Activated CD8-positive, alpha-beta T cell treated with anti-CD3 and anti-CD28 coated beads, Interleukin-2, amount 10 ng/mL, durations not matched to agents 7 days and 5 days (primary cell): ENCODE measurements at regions of chr9 and their contacts with region 1.

Region 1: GRCh38 chr9:120875954-120876841 is 790 bp downstream of the PHF19 start:
- DNase-seq: peak; percentile 96
- ATAC-seq: peak; percentile 57
- H3K4me3 Mint-ChIP-seq: peak overlapping the region; percentile 88
- H3K27ac Mint-ChIP-seq: peak overlapping the region; percentile 95
- H3K4me1 Mint-ChIP-seq: peaks cover 77% of the 10 kb centered on the region
- H3K27me3 Mint-ChIP-seq: no peaks in the 10 kb centered on the region

Region 2: DNA sequence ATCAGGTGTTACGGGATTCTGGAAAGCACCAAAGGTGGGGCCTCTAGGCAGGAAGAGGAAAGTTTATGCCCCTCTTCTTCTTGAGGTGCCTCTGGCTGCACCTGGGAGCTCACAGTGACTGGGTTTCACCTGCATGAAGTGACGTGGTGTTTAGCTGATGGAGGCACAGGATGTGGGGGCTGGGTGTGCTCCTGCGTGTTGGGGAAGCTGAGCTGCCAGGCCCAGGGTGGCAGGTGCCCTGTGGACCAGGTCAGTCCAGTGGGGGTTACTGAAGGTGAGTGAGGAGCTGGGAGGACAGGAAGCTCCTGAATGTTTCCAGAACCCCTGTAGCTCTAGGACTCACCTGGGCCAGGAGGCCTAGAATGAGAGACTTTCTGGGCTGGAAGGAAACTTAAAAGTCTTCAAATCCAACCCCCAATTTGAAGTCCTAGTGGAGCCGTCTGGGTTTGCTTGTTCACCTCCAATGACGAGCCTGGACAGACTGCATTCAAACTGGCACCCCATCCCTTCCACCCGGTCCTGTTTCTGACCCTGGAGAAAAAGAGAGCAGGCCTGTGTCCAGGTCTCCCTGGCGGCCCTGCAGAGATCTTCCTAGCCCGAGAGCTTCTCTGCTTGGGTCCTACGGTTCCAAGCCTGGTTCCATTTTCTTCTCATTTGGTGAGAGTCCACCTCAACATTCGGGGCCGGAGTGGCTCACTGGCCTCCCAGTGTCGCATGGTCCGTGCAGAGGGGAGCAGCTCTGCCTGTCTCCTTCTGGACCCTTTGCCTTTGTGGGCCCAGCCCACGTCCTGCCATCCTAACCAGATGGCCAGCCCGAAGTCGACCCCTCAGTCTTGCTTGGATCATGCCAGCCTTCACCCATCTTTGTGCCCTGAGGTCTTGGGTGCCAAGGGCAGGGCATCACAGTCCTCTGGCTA is 28.1 kb after region 1 on chr9:
- CTCF ChIA-PET with region 1: interaction called, 7 read pairs
- POLR2A ChIA-PET with region 1: interaction called, 30 read pairs
- DNase-seq: peak; percentile 69
- ATAC-seq: peak; percentile 55
- H3K4me3 Mint-ChIP-seq: no peak overlapping the region
- H3K27ac Mint-ChIP-seq: peak overlapping the region; percentile 88
- H3K4me1 Mint-ChIP-seq: peaks cover 90% of the 10 kb centered on the region
- H3K27me3 Mint-ChIP-seq: no peaks in the 10 kb centered on the region

Region 3: GRCh38 chr9:120916588-120916987 is 40.4 kb after region 1 on chr9:
- CTCF ChIA-PET with region 1: interaction called, 8 read pairs
- POLR2A ChIA-PET with region 1: interaction called, 344 read pairs
- DNase-seq: no peak
- ATAC-seq: no peak
- H3K4me3 Mint-ChIP-seq: peak overlapping the region; percentile 34
- H3K27ac Mint-ChIP-seq: peak overlapping the region; percentile 80
- H3K4me1 Mint-ChIP-seq: peaks cover 86% of the 10 kb centered on the region
- H3K27me3 Mint-ChIP-seq: no peaks in the 10 kb centered on the region

Region 4: GRCh38 chr9:120936011-120936763 is 60.0 kb after region 1 on chr9:
- CTCF ChIA-PET with region 1: interaction called, 66 read pairs
- POLR2A ChIA-PET with region 1: interaction called, 344 read pairs
- DNase-seq: peak; percentile 91
- ATAC-seq: peak; percentile 72
- H3K4me3 Mint-ChIP-seq: peak overlapping the region; percentile 15
- H3K27ac Mint-ChIP-seq: peak overlapping the region; percentile 77
- H3K4me1 Mint-ChIP-seq: peaks cover 62% of the 10 kb centered on the region
- H3K27me3 Mint-ChIP-seq: peaks cover 5% of the 10 kb centered on the region